Mammary epithelial cell (primary cell): ENCODE measurements at regions of chr18 and their contacts with region 1.

Region 1: GRCh38 chr18:80200171-80200931 is 47.0 kb downstream of the PARD6G start:
- DNase-seq: no peak
- H3K4me3 ChIP-seq: no peak overlapping the region
- H3K27ac ChIP-seq: no peak overlapping the region
- H3K4me1 ChIP-seq: peaks cover 17% of the 10 kb centered on the region
- H3K27me3 ChIP-seq: no peaks in the 10 kb centered on the region
- CTCF ChIP-seq: no peak

Region 2: GRCh38 chr18:80119111-80119510 is 81.2 kb before region 1 on chr18:
- CTCF ChIA-PET with region 1: no interaction called
- dilution Hi-C with region 1: no loop called
- in situ Hi-C with region 1: no loop called
- intact Hi-C with region 1: no loop called
- DNase-seq: no peak
- H3K4me3 ChIP-seq: no peak overlapping the region
- H3K27ac ChIP-seq: no peak overlapping the region
- H3K4me1 ChIP-seq: peaks cover 3% of the 10 kb centered on the region
- H3K27me3 ChIP-seq: no peaks in the 10 kb centered on the region
- CTCF ChIP-seq: no peak

Region 3: GRCh38 chr18:80171054-80171872 is 29.1 kb before region 1 on chr18:
- CTCF ChIA-PET with region 1: no interaction called
- dilution Hi-C with region 1: no loop called
- in situ Hi-C with region 1: no loop called
- intact Hi-C with region 1: loop called (anchors 1 kb)
- DNase-seq: peak; percentile 38
- H3K4me3 ChIP-seq: peak overlapping the region in 1 of 3 experiments; percentile 30
- H3K27ac ChIP-seq: no peak overlapping the region
- H3K4me1 ChIP-seq: peaks cover 30% of the 10 kb centered on the region
- H3K27me3 ChIP-seq: no peaks in the 10 kb centered on the region
- CTCF ChIP-seq: peak; percentile 85 to 98

Region 4: GRCh38 chr18:80179857-80180551 is 20.3 kb before region 1 on chr18:
- CTCF ChIA-PET with region 1: no interaction called
- dilution Hi-C with region 1: no loop called
- in situ Hi-C with region 1: no loop called
- intact Hi-C with region 1: loop called (anchors 2 kb)
- DNase-seq: peak; percentile 84
- H3K4me3 ChIP-seq: peak overlapping the region in 2 of 3 experiments; percentile 8 to 9
- H3K27ac ChIP-seq: peak overlapping the region; percentile 68
- H3K4me1 ChIP-seq: peaks cover 47% of the 10 kb centered on the region
- H3K27me3 ChIP-seq: no peaks in the 10 kb centered on the region
- CTCF ChIP-seq: peak; percentile 28 to 53

Region 5: DNA sequence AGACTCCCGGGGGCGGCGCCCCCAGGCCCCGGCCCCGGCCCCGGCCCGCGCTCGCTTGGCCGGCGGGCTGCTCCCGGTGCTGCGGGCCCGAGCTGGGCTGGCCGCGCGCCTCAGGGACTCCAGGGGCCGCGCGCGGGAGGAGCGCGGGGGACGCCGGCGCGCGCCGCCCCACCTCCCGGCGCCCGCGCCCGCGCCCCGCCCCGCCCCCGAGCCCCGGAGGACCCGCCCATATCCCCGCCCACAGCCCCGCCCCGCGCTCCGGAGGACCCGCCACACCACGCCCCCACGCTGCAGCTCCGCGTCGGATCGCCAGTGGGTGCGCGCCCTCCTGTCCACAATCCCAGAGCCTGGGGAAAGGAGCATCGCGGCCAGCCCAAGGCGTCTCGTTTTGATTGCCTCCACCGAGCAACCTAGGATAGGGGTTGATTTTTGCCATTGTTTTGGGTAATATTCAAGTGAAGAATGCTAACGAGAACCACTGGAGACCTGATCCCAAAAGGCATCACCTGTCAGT is 47.1 kb after region 1 on chr18 and contains the start of gene PARD6G:
- CTCF ChIA-PET with region 1: no interaction called
- dilution Hi-C with region 1: no loop called
- in situ Hi-C with region 1: no loop called
- intact Hi-C with region 1: loop called (anchors 2 kb)
- DNase-seq: peak; percentile 59
- H3K4me3 ChIP-seq: peak within 1 kb of the TSS; percentile 73 to 79 (median 73)
- H3K27ac ChIP-seq: peak within 1 kb of the TSS; percentile 58
- H3K4me1 ChIP-seq: peaks cover 53% of the 10 kb centered on the region
- H3K27me3 ChIP-seq: no peaks in the 10 kb centered on the region
- CTCF ChIP-seq: no peak
- total RNA-seq, gene PARD6G: 34.9 to 35.7 TPM

Region 6: GRCh38 chr18:80253871-80254492 is 53.6 kb after region 1 on chr18:
- CTCF ChIA-PET with region 1: interaction called, 3 read pairs
- dilution Hi-C with region 1: no loop called
- in situ Hi-C with region 1: no loop called
- intact Hi-C with region 1: loop called (anchors 1 kb)
- DNase-seq: no peak
- H3K4me3 ChIP-seq: no peak overlapping the region
- H3K27ac ChIP-seq: no peak overlapping the region
- H3K4me1 ChIP-seq: peaks cover 28% of the 10 kb centered on the region
- H3K27me3 ChIP-seq: no peaks in the 10 kb centered on the region
- CTCF ChIP-seq: no peak